Aorta (tissue), 5 donors: ENCODE measurements at regions of chrX and their contacts with region 1.

Region 1: GRCh38 chrX:136866337-136867095 is 14.0 kb downstream of the RBMX start:
- DNase-seq: no peak
- ATAC-seq: no peak
- H3K4me3 ChIP-seq: no peak overlapping the region
- H3K27ac ChIP-seq: peak overlapping the region; percentile 14 to 36
- H3K4me1 ChIP-seq: no peaks in the 10 kb centered on the region
- H3K27me3 ChIP-seq: no peaks in the 10 kb centered on the region

Region 2: DNA sequence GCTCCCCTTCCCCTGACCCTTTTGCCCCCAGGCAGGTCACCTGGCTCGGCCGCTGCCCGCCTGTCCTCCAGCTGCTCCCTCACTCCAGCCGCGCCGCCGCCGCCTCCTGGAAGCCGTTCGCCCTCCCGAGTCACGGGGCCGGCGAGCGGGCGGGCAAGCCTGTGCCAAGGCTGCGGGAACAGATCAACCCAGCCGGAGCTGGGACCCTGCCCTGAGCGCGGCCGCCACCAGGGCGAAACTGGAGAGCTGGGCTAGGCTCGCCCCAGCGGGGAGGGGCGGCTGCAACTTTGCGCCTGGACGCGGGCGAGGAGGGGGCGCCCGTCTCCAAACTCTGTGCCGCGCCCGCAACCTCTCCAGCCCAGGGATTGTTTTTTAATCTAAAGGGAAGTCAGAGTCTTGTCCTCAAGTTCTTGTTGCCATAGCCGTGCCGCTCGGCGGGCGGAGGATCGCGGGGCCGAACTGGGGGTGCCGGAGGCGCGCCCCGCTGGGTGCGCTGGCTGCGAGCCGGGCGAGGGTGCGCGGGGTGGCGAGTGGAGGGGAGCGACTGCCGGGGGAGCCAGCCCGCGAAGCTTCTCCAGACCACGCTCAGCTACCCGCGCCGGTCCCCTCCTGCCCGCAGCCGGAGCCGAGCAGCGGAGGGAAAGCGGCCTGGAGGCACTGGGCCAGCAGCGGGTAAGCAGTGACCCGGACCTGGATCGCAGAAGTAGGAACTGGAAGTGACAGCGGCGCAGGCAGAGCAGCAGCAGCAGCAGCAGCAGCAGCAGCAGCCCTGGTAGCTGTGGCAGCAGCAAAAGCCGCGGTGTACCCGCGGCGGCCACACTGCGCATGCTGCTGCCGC is 99.2 kb before region 1 on chrX:
- intact Hi-C with region 1: loop called in 1 of 2 experiments (anchors 10 kb)
- DNase-seq: peak; percentile 84 to 88
- ATAC-seq: peak; percentile 82
- H3K4me3 ChIP-seq: peak overlapping the region; percentile 52 to 67
- H3K27ac ChIP-seq: peak overlapping the region; percentile 10 to 88
- H3K4me1 ChIP-seq: no peaks in the 10 kb centered on the region
- H3K27me3 ChIP-seq: no peaks in the 10 kb centered on the region